Sigmoid colon (tissue), 7 donors: ENCODE measurements at regions of chrX and their contacts with region 1.

Region 1: GRCh38 chrX:11100281-11101035 is 10.7 kb upstream of the HCCS start:
- DNase-seq: peak; percentile 74
- H3K4me3 ChIP-seq: no peak overlapping the region
- H3K27ac ChIP-seq: peak overlapping the region; percentile 66 to 73 (median 70)
- H3K4me1 ChIP-seq: peaks cover 0 to 12% (median 0%) of the 10 kb centered on the region in 4 donors
- H3K27me3 ChIP-seq: no peaks in the 10 kb centered on the region
- CTCF ChIP-seq: peak; percentile 18 to 46 (median 30)
- EP300 ChIP-seq: no peak
- POLR2A ChIP-seq: no peak

Region 2: GRCh38 chrX:10636337-10636736 is 464.1 kb before region 1 on chrX:
- intact Hi-C with region 1: loop called (anchors 5 kb)
- DNase-seq: no peak
- H3K4me3 ChIP-seq: peak overlapping the region in 1 of 4 donors; percentile 15
- H3K27ac ChIP-seq: peak overlapping the region; percentile 2 to 78 (median 71)
- H3K4me1 ChIP-seq: peaks cover 0 to 19% (median 9%) of the 10 kb centered on the region in 4 donors
- H3K27me3 ChIP-seq: no peaks in the 10 kb centered on the region
- CTCF ChIP-seq: peak; percentile 33 to 46 (median 44)
- EP300 ChIP-seq: no peak
- POLR2A ChIP-seq: no peak

Region 3: DNA sequence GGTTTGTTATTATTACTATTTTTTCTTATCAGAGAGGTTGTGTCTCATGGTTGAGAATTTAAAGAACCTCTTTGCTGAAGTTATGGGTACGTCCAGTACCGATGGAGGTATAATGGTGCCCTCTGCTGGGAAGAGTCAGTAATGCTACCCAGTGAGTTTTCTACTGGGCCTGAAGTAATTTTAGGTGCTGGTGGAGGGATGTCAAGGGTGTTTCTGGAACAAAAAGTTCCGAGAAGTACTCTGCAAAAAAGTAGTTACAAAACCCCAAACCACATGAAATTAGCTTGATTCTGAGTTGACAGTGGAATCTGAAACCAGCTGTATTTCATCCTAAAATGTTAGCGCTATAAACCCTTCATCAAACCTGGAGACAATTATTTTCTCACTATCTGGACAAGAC is 377.6 kb before region 1 on chrX:
- intact Hi-C with region 1: loop called (anchors 5 kb)
- DNase-seq: peak; percentile 83
- H3K4me3 ChIP-seq: no peak overlapping the region
- H3K27ac ChIP-seq: peak overlapping the region in 2 of 4 donors; percentile 19 to 33
- H3K4me1 ChIP-seq: peaks cover 0 to 19% (median 7%) of the 10 kb centered on the region in 4 donors
- H3K27me3 ChIP-seq: no peaks in the 10 kb centered on the region
- CTCF ChIP-seq: peak; percentile 36 to 58 (median 53)
- EP300 ChIP-seq: no peak
- POLR2A ChIP-seq: no peak

Region 4: GRCh38 chrX:10833299-10834169 is 266.9 kb before region 1 on chrX:
- intact Hi-C with region 1: loop called (anchors 10 kb)
- DNase-seq: peak; percentile 71
- H3K4me3 ChIP-seq: peak overlapping the region; percentile 18 to 47 (median 40)
- H3K27ac ChIP-seq: peak overlapping the region; percentile 48 to 72 (median 67)
- H3K4me1 ChIP-seq: peaks cover 0 to 18% (median 2%) of the 10 kb centered on the region in 4 donors
- H3K27me3 ChIP-seq: no peaks in the 10 kb centered on the region
- CTCF ChIP-seq: no peak
- EP300 ChIP-seq: no peak
- POLR2A ChIP-seq: no peak

Region 5: DNA sequence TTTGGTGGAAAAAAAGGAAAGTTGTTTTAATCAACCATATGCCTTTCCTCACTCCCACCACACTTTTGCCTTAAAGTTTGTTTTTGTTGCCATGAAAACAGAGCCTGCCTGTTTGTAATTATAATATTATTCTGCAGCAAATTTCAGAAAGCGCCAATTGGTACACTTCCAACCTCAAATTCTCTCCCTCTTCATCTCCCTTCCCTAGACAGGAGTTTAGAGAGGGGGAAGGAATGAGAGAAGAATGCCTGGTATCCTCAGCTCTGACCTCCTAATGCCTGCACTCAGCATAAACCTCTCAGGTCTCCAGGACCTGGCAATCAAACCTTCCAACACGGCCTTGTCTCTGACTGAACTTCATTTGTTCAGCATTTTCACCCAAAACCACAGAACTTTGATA is 127.8 kb before region 1 on chrX:
- intact Hi-C with region 1: no loop called
- DNase-seq: no peak
- H3K4me3 ChIP-seq: no peak overlapping the region
- H3K27ac ChIP-seq: no peak overlapping the region
- H3K4me1 ChIP-seq: no peaks in the 10 kb centered on the region
- H3K27me3 ChIP-seq: no peaks in the 10 kb centered on the region
- CTCF ChIP-seq: no peak
- EP300 ChIP-seq: no peak
- POLR2A ChIP-seq: no peak